ENCODE measurements at regions of chr17 and their contacts with region 1.

Region 1: GRCh38 chr17:39621523-39622379 is 5.0 kb upstream of the PPP1R1B start:
- DNase-seq: peak; percentile 91
- ATAC-seq: peak; percentile 81

Region 2: GRCh38 chr17:39294060-39294459 is 327.7 kb before region 1 on chr17:
- intact Hi-C with region 1: no loop called
- DNase-seq: no peak
- ATAC-seq: no peak

Region 3: DNA sequence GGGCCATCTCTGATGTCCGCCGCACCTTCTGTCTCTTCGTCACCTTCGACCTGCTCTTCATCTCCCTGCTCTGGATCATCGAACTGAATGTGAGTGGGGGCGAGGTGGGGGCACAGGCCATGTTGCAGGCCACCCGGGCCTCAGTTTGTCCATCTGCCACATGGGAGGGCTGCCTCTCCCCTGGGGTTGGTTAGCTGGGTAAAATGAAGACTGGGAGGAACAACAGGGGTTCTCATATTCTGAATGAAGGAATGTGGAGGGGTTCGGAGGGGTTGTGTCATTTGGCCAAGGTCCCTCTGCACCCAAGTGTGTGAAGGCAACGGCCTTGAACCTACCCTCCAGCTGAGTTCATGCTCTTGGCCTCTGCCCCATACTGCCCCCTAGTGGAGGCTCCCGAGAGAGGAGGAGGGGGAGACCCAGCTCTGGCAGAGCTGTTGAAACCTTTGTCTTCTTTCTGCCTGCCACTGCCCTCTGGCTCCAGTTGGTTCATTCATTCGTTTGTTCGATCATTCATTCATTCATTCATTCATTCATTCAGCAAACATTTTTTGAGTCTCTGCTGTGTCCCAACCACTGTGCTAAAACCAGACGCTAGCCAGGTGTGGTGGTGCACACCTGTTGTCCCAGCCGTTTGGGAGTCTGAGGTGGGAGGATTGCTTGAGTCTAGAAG is 32.0 kb after region 1 on chr17:
- intact Hi-C with region 1: no loop called
- DNase-seq: peak; percentile 85
- ATAC-seq: peak; percentile 71

Region 4: DNA sequence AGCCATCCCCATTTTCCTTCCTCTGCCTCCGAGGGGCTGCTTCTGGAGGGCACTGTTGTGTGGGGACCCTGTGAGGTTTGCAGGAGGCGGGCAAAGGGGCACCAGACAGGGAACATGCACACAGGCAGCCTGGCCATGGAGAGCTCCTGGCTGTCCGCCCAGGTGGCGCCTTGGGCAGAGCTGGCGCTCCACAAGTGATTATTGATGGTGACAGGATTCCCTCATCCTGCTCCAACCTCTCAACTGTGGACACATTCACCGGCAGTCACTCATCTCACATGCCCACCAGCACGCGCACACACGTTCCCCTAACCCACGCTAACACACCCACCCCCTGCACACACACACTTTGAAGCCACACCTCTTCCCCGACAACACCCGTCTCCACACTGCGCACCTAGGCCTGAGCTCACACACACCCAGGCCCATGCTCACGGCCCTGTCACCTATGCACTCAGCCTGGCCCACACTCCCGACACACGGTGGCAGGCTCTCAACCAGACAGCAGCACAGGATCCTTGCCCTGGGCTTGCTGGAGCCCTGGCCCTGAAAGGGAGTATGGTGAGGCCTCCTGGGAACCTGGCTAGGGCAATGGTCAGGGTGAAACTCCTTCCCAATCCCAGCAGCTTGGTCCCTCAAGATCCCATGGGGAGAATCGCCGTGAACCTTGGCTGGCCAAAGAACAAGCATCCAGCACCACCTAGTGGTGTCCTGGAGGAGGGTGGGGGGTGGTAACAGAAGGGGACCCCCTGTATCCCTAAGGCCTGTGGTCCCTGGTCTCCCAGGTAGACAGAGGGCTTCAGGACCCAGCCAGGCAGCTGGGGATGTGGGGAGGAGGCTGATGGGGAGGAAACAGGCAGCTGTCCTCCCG is 50.1 kb after region 1 on chr17:
- intact Hi-C with region 1: loop called (anchors 5 kb)
- DNase-seq: no peak
- ATAC-seq: no peak

Region 5: DNA sequence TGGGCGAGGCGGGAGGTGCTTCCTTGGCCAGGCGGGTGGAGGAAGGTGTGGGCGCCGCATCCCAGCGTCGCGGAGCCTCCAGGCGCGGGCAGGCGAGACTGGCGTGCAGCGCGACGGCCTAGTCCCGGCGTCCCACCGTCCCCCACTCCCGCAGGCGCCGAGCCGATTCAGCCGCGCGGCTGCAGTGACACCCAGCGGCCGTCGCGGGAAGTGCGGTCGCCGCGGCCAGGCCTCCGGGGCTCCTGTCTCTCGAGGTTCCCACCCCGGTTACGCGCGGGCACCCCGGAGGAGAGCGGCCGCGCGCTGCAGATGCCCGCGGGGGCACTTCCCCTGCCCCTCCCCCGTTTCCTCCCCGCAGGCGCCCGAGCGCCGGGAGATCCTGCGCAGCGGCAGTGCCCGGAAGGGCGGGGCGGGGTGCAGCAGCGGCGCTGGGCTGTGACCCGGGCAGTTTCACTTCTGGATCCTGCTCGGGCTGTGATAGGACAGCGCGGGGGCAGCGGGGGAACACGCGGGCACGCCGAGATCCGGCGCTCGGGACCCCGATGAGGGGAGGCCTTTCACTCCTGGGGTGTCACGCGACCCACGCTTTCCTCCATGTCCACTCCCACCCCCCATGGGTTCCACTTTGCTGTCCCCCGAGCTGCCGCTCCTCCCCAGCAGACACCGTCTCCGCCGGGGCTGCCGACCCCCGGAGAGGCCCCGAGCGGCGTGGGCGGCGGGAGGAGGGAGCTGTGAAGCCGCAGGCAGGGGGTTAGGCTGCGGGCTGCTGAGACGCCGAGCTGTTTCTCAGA is 132.6 kb after region 1 on chr17:
- intact Hi-C with region 1: loop called (anchors 5 kb)
- DNase-seq: peak; percentile 94
- ATAC-seq: peak; percentile 96

Measured in sciatic nerve (tissue), 2 donors.